A673 (cell line): ENCODE measurements at regions of chr11 and their contacts with region 1.

Region 1: DNA sequence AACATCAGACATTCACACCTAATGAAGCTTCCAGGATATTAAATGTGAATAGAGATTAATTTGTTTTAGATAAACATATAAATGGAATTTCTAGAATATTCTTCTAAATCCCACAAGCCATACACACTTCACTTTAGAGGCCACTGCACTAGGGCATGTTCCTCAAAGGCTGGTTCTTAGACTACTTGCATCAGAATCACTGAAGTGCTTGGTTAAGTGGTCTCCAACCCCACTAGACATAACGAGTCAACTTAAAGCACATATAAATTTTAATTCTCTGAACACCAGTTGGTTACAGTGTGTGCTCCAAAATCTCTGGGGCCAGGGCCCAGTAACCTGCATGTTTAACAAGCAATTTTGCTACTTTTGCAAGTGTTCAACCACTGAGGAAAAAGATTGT is 7.9 kb upstream of the ALKBH8 start:
- DNase-seq: no peak
- H3K4me3 ChIP-seq: no peak overlapping the region
- H3K27ac ChIP-seq: no peak overlapping the region
- H3K4me1 ChIP-seq: no peaks in the 10 kb centered on the region
- H3K27me3 ChIP-seq: no peaks in the 10 kb centered on the region
- CTCF ChIP-seq: no peak

Region 2: DNA sequence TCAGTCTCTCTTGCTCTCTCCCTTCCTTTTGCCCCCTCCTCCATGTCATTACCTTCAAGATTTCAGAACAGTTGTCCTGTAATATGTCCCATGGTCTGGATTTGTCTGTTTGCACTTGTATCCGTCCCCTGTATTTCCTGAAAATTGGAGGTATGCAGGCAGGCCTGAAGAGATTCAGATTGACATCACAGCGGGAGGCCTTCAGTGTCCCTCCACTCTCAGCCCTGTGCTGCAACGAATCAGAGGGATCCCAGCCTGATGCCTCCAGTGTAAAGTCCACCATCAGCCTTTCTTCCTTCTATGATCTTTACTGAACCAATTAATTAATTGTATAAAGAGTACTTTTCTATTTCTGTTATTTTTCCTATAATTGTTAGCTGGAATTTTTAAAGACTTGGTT is 74.8 kb after region 1 on chr11:
- CTCF ChIA-PET with region 1: no interaction called
- POLR2A ChIA-PET with region 1: no interaction called
- intact Hi-C with region 1: no loop called
- DNase-seq: no peak
- H3K4me3 ChIP-seq: no peak overlapping the region
- H3K27ac ChIP-seq: no peak overlapping the region
- H3K4me1 ChIP-seq: no peaks in the 10 kb centered on the region
- H3K27me3 ChIP-seq: peaks cover 4% of the 10 kb centered on the region
- CTCF ChIP-seq: no peak

Region 3: GRCh38 chr11:107689317-107690202 is 116.1 kb after region 1 on chr11:
- CTCF ChIA-PET with region 1: interaction called, 5 read pairs
- POLR2A ChIA-PET with region 1: no interaction called
- intact Hi-C with region 1: loop called (anchors 1 kb)
- DNase-seq: peak; percentile 83
- H3K4me3 ChIP-seq: no peak overlapping the region
- H3K27ac ChIP-seq: no peak overlapping the region
- H3K4me1 ChIP-seq: no peaks in the 10 kb centered on the region
- H3K27me3 ChIP-seq: no peaks in the 10 kb centered on the region
- CTCF ChIP-seq: peak; percentile 79

Region 4: GRCh38 chr11:107770551-107770951 is 197.1 kb after region 1 on chr11:
- CTCF ChIA-PET with region 1: no interaction called
- POLR2A ChIA-PET with region 1: no interaction called
- intact Hi-C with region 1: loop called (anchors 2 kb)
- DNase-seq: peak; percentile 16
- H3K4me3 ChIP-seq: no peak overlapping the region
- H3K27ac ChIP-seq: no peak overlapping the region
- H3K4me1 ChIP-seq: no peaks in the 10 kb centered on the region
- H3K27me3 ChIP-seq: no peaks in the 10 kb centered on the region
- CTCF ChIP-seq: no peak

Region 5: DNA sequence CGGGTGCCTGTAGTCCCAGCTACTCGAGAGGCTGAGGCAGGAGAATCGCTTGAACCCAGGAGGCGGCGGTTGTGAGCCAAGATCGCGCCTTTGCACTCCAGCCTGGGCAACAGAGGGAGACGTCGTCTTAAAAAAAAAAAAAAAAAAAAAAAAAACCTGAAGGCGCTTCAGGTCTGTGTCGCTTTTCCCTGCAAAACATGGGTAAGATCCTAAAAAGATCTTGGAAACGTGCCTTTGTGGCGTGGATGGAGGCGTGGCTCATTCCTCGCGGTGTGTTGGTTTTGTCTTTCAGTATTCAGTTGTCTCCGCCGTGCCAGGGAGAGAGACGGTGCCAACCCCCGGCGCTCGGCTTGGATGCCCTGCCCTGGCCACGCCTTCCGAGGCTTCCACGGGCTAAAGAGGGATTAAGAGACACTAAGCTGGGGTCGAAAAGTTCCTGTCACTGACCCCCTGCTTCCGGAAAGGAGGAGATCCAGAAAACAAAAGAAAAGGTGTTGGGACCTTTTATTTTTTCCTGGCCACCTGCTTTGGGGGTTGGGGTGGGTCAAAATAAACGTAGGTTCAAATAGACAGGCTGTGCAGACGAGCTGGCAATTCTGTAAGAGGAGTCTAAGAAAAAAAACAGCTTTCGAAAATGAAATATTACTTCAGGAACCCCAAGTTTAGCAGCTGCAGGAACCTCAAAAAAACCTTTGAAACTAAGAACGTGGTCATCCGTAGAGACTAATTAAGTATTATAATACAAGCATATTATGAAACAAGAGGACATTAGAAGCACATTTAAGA is 286.2 kb after region 1 on chr11:
- CTCF ChIA-PET with region 1: no interaction called
- POLR2A ChIA-PET with region 1: no interaction called
- intact Hi-C with region 1: no loop called
- DNase-seq: peak; percentile 67
- H3K4me3 ChIP-seq: peak overlapping the region; percentile 73
- H3K27ac ChIP-seq: peak overlapping the region; percentile 74
- H3K4me1 ChIP-seq: peaks cover 11% of the 10 kb centered on the region
- H3K27me3 ChIP-seq: no peaks in the 10 kb centered on the region
- CTCF ChIP-seq: no peak

Region 6: GRCh38 chr11:107898270-107898669 is 324.8 kb after region 1 on chr11:
- CTCF ChIA-PET with region 1: interaction called, 3 read pairs
- POLR2A ChIA-PET with region 1: no interaction called
- intact Hi-C with region 1: loop called (anchors 10 kb)
- DNase-seq: peak; percentile 65
- H3K4me3 ChIP-seq: no peak overlapping the region
- H3K27ac ChIP-seq: no peak overlapping the region
- H3K4me1 ChIP-seq: no peaks in the 10 kb centered on the region
- H3K27me3 ChIP-seq: peaks cover 5% of the 10 kb centered on the region
- CTCF ChIP-seq: peak; percentile 74